ENCODE measurements at regions of chr18 and their contacts with region 1.

Region 1: DNA sequence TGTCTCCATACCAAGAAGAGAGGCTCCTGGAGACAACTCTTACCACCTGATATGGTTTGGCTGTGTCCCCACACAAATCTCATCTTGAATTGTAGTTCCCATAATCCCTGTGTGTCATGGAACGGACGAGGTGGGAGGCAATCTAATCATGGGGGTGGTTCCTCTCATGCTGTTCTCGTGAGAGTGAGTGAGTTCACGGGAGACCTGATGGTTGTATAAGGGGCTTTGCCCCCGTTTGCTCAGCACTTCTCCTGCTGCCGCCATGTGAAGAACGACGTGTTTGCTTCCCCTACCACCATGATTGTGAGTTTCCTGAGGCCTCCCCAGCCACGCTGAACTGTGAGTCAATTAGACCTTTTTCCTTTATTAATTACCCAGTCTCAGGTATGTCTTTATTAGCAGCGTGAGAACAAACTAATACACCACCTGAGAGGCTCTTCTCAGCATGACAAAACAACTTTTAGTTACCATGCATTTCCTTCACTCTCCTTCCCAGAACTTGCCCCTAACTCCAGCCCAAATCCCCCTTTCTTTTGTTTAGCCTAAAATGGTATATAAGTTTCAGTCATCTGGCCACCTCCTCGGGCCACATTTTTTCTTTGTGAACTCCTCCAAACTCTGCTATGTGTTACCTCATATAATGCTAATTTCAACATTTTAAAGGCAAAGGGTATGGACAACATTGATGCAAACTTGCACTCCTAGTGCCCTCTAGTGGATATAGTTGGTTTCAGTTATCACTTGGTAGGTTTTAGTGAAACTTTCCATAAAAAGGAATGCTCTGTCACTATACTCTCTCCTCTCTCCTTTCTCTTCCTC is 58.6 kb upstream of the SLC25A52 start:
- DNase-seq: peak; percentile 62
- H3K4me3 Mint-ChIP-seq: no peak overlapping the region
- H3K27ac Mint-ChIP-seq: no peak overlapping the region
- H3K4me1 Mint-ChIP-seq: peaks cover 6% of the 10 kb centered on the region
- H3K27me3 Mint-ChIP-seq: no peaks in the 10 kb centered on the region
- CTCF ChIP-seq: peak; percentile 58

Region 2: DNA sequence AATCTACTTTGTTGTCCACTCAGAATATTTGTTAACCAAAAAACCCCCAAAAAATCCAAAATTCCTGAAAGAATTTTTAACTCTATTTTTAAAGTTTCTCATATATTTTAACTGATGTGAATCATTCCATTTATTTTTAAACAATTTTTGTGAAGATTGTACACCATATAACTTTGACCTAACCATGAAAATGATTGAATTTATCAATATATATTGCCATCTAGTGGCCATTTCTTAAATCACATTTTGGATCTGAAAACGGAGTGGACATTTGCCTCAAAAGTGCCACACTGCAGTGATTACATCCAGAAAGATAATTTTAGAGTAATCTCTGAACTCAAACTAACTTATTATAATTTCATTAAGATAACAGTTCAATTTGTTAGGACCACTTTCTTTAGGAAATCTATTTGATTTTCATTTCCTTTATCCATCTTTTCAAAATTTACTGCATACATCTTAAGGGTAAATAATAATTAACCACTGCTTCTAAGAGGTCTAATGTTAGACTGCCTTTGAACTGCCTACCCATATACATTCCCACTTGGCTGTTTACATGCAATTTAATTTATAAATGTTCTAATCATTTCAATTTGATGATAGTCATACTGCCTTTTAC is 847.9 kb before region 1 on chr18:
- CTCF ChIA-PET with region 1: interaction called, 4 read pairs
- POLR2A ChIA-PET with region 1: no interaction called
- intact Hi-C with region 1: loop called (anchors 2 kb)
- DNase-seq: peak; percentile 52
- H3K4me3 Mint-ChIP-seq: no peak overlapping the region
- H3K27ac Mint-ChIP-seq: no peak overlapping the region
- H3K4me1 Mint-ChIP-seq: no peaks in the 10 kb centered on the region
- H3K27me3 Mint-ChIP-seq: no peaks in the 10 kb centered on the region
- CTCF ChIP-seq: peak; percentile 36

Region 3: DNA sequence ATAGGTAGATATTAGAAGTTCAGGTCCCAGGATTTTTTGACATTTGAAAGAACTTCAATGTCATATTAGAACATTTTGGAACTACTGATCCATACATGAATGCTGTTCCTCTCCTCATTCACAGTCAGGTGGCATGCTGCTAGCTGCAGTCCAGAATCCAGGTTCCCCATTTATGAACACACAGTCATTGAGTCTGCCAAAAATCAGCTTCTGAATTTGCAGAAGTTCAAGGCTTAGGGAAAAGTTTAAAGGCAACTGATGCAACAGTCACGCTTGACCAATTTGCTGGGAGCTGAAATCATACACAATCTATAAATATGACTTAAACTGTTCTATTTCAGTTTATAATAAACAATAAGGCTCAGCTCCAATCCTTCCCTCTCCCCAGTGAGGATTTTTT is 245.0 kb before region 1 on chr18:
- CTCF ChIA-PET with region 1: interaction called, 3 read pairs
- POLR2A ChIA-PET with region 1: no interaction called
- intact Hi-C with region 1: loop called (anchors 5 kb)
- DNase-seq: no peak
- H3K4me3 Mint-ChIP-seq: no peak overlapping the region
- H3K27ac Mint-ChIP-seq: no peak overlapping the region
- H3K4me1 Mint-ChIP-seq: no peaks in the 10 kb centered on the region
- H3K27me3 Mint-ChIP-seq: no peaks in the 10 kb centered on the region
- CTCF ChIP-seq: no peak

Region 4: DNA sequence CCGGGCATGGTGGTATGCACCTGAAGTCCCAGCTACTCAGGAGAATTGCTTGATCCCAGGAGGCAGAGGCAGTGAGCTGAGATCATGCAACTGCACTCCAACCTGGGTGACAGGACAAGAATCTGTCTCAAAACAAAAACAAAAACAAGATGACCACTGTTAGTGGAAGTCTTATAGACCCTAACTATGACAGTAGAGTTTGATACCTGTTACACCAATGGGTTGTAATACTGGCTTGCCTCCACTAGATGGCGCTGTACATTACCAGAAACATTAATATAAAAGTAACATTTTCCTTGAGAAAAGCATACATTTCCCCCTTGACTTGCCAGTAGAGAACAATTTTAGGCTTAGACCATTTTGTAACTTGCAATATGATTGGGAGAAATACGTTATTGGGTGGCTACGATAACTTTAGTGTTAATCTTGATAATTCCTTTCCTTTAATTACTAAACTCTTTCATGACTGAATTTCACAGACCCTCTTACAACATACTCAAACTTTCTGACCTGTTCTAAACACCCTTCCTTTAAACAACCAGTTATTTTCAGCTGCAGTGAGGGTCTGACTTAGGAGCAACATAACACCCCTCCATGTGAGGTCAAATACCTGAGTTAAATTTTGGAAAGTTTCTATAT is 78.1 kb before region 1 on chr18:
- CTCF ChIA-PET with region 1: interaction called, 24 read pairs
- POLR2A ChIA-PET with region 1: no interaction called
- intact Hi-C with region 1: loop called (anchors 1 kb)
- DNase-seq: peak; percentile 59
- H3K4me3 Mint-ChIP-seq: no peak overlapping the region
- H3K27ac Mint-ChIP-seq: no peak overlapping the region
- H3K4me1 Mint-ChIP-seq: no peaks in the 10 kb centered on the region
- H3K27me3 Mint-ChIP-seq: no peaks in the 10 kb centered on the region
- CTCF ChIP-seq: peak; percentile 81

Region 5: DNA sequence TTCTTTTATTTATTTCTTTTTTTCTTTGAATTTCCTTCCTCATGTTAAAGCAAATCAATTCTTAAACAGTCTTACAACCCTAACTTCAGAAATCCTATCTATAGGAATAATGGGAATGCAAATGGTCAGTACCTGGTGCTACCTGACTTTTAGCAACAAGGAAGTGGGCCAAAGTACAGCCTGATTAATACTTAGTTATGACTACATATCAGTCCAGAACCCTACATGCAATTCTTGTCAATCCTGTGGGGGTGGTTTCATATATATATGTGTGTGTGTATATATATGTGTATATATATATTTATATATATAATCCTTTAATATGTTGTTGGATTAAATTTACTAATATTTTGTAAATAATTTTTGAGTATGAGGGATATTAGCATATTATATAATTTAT is 138.4 kb after region 1 on chr18:
- CTCF ChIA-PET with region 1: interaction called, 3 read pairs
- POLR2A ChIA-PET with region 1: no interaction called
- intact Hi-C with region 1: loop called (anchors 1 kb)
- DNase-seq: no peak
- H3K4me3 Mint-ChIP-seq: no peak overlapping the region
- H3K27ac Mint-ChIP-seq: no peak overlapping the region
- H3K4me1 Mint-ChIP-seq: peaks cover 5% of the 10 kb centered on the region
- H3K27me3 Mint-ChIP-seq: no peaks in the 10 kb centered on the region
- CTCF ChIP-seq: no peak

Region 6: GRCh38 chr18:31977270-31977872 is 158.1 kb after region 1 on chr18:
- CTCF ChIA-PET with region 1: no interaction called
- POLR2A ChIA-PET with region 1: no interaction called
- intact Hi-C with region 1: loop called (anchors 1 kb)
- DNase-seq: peak; percentile 56
- H3K4me3 Mint-ChIP-seq: no peak overlapping the region
- H3K27ac Mint-ChIP-seq: no peak overlapping the region
- H3K4me1 Mint-ChIP-seq: no peaks in the 10 kb centered on the region
- H3K27me3 Mint-ChIP-seq: no peaks in the 10 kb centered on the region
- CTCF ChIP-seq: peak; percentile 56

Region 7: DNA sequence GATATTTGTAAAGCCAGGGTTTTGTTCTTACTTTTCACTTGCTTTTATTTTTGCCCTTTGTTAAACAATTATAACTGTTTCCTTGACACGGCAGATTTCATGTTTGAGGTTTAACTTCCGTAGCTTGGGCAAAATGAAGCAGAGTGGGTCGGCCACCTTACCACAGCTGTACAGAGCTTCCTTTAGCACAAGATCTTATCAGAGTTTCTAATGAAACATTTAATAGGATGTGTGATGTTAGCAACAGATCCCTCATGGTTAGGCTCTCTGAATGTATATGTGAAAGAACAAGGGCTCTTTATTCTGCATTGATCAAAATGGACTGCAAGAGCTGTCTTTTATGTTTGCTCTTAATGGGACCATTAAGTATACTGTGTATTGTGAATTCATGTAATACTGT is 221.6 kb after region 1 on chr18:
- CTCF ChIA-PET with region 1: no interaction called
- POLR2A ChIA-PET with region 1: no interaction called
- intact Hi-C with region 1: no loop called
- DNase-seq: no peak
- H3K4me3 Mint-ChIP-seq: no peak overlapping the region
- H3K27ac Mint-ChIP-seq: no peak overlapping the region
- H3K4me1 Mint-ChIP-seq: no peaks in the 10 kb centered on the region
- H3K27me3 Mint-ChIP-seq: no peaks in the 10 kb centered on the region
- CTCF ChIP-seq: no peak